ENCODE measurements at regions of chr11 and their contacts with region 1.

Region 1: GRCh38 chr11:100141201-100141600 is 545.9 kb upstream of the ARHGAP42 start:
- DNase-seq: no peak
- ATAC-seq: no peak
- H3K4me3 Mint-ChIP-seq: no peak overlapping the region
- H3K27ac Mint-ChIP-seq: no peak overlapping the region
- H3K4me1 Mint-ChIP-seq: no peaks in the 10 kb centered on the region
- H3K27me3 Mint-ChIP-seq: no peaks in the 10 kb centered on the region
- CTCF ChIP-seq: no peak

Region 2: DNA sequence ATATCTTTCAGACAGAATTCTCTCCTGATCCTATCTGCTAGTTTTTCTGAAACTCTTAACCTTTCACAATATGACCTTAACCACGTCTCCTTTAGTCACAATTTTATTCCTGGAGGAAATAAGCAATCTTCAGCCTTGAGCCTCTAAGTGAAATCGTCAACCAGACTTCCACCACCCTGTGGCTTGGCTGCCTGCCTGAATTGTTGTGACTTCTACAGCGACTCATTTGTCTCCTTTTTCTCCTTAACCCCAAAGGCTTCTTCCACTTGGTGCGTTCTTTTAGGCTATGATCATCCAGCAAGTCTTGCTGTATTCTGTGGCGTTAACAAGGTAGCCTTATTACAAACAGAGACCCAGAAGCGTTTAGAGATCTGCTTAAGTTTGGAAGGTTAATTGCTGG is 10.7 kb after region 1 on chr11:
- CTCF ChIA-PET with region 1: no interaction called
- POLR2A ChIA-PET with region 1: no interaction called
- intact Hi-C with region 1: loop called (anchors 1 kb)
- DNase-seq: no peak
- ATAC-seq: no peak
- H3K4me3 Mint-ChIP-seq: no peak overlapping the region
- H3K27ac Mint-ChIP-seq: no peak overlapping the region
- H3K4me1 Mint-ChIP-seq: no peaks in the 10 kb centered on the region
- H3K27me3 Mint-ChIP-seq: no peaks in the 10 kb centered on the region
- CTCF ChIP-seq: no peak